T-cell (primary cell): ENCODE measurements at regions of chr1 and their contacts with region 1.

Region 1: DNA sequence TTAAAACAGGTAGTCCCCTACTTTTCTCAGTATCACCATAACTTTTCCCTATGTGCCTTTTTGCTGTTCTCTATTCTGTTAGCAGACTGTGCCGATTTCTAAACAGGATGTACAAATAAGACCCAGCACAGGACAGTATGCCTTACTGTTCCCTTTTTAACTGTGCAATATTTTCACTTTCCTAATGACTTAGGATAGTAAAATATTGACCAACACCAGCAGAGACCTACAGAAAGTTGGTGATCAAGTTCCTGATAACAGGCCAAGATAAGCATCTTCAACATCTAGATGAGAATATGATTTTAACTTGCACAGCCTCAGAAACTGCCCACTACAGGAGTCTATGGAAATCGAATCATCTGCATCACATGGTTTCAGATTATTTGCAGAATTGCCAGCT is 42.0 kb downstream of the ADSS2 start:
- DNase-seq: no peak
- ATAC-seq: no peak
- H3K4me3 ChIP-seq: no peak overlapping the region
- H3K4me3 Mint-ChIP-seq: no peak overlapping the region
- H3K27ac ChIP-seq: no peak overlapping the region
- H3K27ac Mint-ChIP-seq: no peak overlapping the region
- H3K4me1 ChIP-seq: no peaks in the 10 kb centered on the region
- H3K4me1 Mint-ChIP-seq: no peaks in the 10 kb centered on the region
- H3K27me3 ChIP-seq: no peaks in the 10 kb centered on the region
- H3K27me3 Mint-ChIP-seq: no peaks in the 10 kb centered on the region

Region 2: GRCh38 chr1:244458781-244459180 is 49.1 kb after region 1 on chr1:
- CTCF ChIA-PET with region 1: interaction called in 1 of 2 experiments, 13 read pairs
- POLR2A ChIA-PET with region 1: no interaction called
- DNase-seq: no peak
- ATAC-seq: no peak
- H3K4me3 ChIP-seq: no peak overlapping the region
- H3K4me3 Mint-ChIP-seq: no peak overlapping the region
- H3K27ac ChIP-seq: no peak overlapping the region
- H3K27ac Mint-ChIP-seq: no peak overlapping the region
- H3K4me1 ChIP-seq: peaks cover 5 to 18% of the 10 kb centered on the region in 2 experiments
- H3K4me1 Mint-ChIP-seq: peaks cover 13 to 20% (median 15%) of the 10 kb centered on the region in 3 donors
- H3K27me3 ChIP-seq: no peaks in the 10 kb centered on the region
- H3K27me3 Mint-ChIP-seq: no peaks in the 10 kb centered on the region